OCI-LY7 (cell line): ENCODE measurements at regions of chr2 and their contacts with region 1.

Region 1: GRCh38 chr2:47388888-47389287 is 14.1 kb upstream of the MSH2 start:
- DNase-seq: no peak
- H3K4me3 ChIP-seq: no peak overlapping the region
- H3K27ac ChIP-seq: no peak overlapping the region
- H3K4me1 ChIP-seq: no peaks in the 10 kb centered on the region
- CTCF ChIP-seq: no peak

Region 2: DNA sequence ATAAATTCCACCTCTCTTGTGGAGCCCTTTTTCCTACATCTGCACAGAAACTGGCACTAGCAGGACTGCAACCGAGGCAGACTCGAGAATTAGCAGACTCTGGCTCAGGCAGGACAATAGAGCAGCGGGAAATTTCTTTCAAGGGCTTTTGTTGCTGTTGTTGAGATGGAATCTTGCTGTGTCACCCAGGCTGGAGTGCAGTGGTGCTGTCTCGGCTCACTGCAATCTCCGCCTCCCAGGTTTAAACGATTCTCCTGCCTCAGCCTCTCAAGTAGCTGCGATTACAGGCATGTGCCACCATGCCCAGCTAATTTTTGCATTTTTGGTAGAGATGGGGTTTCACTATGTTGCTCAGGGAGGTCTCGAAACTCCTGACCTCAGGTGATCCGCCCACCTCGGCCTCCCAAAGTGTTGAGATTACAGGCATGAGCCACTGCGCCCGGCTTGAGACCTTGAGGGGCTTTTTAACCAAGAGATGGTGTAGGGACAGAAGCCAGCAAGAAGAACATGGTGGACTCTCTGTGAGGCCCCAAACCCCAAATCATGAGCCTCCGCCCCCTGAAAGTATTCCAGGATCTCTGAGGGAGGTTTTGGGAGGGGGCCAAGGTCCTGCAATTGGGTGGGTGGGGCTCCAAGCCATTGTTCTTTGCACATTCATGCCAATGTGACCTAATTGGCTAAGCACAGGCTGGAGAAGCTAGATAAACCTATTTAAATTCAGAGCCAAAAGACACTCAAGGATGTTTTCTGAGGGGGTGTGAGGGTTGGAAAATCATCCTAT is 54.3 kb before region 1 on chr2:
- CTCF ChIA-PET with region 1: interaction called, 6 read pairs
- POLR2A ChIA-PET with region 1: interaction called, 3 read pairs
- intact Hi-C with region 1: loop called (anchors 1 kb)
- DNase-seq: no peak
- H3K4me3 ChIP-seq: no peak overlapping the region
- H3K27ac ChIP-seq: no peak overlapping the region
- H3K4me1 ChIP-seq: peaks cover 18% of the 10 kb centered on the region
- CTCF ChIP-seq: no peak

Region 3: GRCh38 chr2:47569658-47570472 is 181.0 kb after region 1 on chr2:
- CTCF ChIA-PET with region 1: no interaction called
- POLR2A ChIA-PET with region 1: no interaction called
- intact Hi-C with region 1: no loop called
- DNase-seq: no peak
- H3K4me3 ChIP-seq: no peak overlapping the region
- H3K27ac ChIP-seq: no peak overlapping the region
- H3K4me1 ChIP-seq: no peaks in the 10 kb centered on the region
- CTCF ChIP-seq: no peak